HepG2 (cell line): ENCODE measurements at regions of chr11 and their contacts with region 1.

Region 1: DNA sequence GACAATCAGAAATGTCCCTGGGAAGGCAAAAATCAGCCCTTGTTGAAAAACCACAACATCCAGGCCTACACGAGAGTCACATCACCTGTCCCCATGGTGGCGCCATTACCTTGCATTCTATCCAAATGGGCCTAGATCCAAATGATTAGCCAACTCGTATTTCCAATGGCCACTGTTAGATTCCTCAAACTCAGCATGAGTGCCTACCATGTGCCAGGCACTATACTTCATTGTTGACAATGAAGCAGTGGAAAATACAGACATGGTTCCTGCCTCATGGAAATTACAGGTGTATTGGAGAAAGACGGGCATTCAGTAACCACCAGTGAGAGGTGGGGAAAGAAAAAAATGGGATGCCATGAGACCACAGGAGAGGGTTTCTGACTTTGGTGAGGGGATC is 29.8 kb upstream of the CREB3L1 start:
- DNase-seq: peak; percentile 72
- ATAC-seq: peak; percentile 12
- H3K4me3 ChIP-seq: no peak overlapping the region
- H3K27ac ChIP-seq: no peak overlapping the region
- H3K4me1 ChIP-seq: peaks cover 46% of the 10 kb centered on the region
- H3K27me3 ChIP-seq: peaks cover 9 to 31% of the 10 kb centered on the region in 2 experiments; a peak in 3 of 5 replicates
- CTCF ChIP-seq: peak; percentile 86
- EP300 ChIP-seq: no peak
- POLR2A ChIP-seq: no peak
- RAD21 ChIP-seq: peak; percentile 80

Region 2: GRCh38 chr11:45444796-45445195 is 802.9 kb before region 1 on chr11:
- CTCF ChIA-PET with region 1: no interaction called
- POLR2A ChIA-PET with region 1: no interaction called
- in situ Hi-C with region 1: no loop called
- intact Hi-C with region 1: no loop called
- DNase-seq: no peak
- ATAC-seq: no peak
- H3K4me3 ChIP-seq: no peak overlapping the region
- H3K27ac ChIP-seq: no peak overlapping the region
- H3K4me1 ChIP-seq: no peaks in the 10 kb centered on the region
- H3K27me3 ChIP-seq: peaks cover 2 to 14% of the 10 kb centered on the region in 2 experiments; a peak in 3 of 5 replicates
- CTCF ChIP-seq: no peak
- EP300 ChIP-seq: no peak
- POLR2A ChIP-seq: no peak
- RAD21 ChIP-seq: no peak

Region 3: DNA sequence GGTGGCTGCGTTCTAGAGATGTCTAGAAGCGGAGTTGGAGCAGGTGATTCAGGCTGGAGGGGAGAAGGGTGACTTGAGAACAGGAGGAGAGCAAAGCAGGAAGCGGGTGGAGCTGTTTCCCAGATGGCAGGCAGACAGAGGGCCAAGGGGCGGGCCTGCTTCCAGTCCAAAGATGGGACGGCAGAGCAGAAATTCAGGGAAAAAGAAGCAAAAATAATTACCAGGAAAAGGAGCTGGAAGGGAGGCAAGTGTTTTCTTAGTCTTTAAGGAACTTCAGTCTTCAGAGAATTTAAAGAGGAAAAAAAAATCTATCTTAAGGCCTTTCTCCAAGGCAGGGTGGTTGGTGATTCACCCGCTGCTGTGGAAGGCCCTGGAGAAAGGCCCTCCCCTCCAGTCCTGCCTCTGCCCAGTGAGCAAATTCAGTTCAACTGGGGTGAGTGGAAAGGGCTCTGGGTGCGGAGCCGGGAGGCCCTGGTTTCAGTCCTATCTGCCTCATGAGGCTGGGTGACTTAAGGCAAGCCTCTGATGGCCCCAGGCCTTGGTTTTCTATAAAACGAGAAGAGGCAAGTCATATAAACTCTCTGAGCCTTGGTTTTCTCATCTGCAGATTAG is 25.3 kb after region 1 on chr11:
- CTCF ChIA-PET with region 1: no interaction called
- POLR2A ChIA-PET with region 1: interaction called, 13 read pairs
- in situ Hi-C with region 1: no loop called
- intact Hi-C with region 1: loop called (anchors 2 kb)
- DNase-seq: no peak
- ATAC-seq: peak; percentile 28; the same call in 2 of the 3 replicates
- H3K4me3 ChIP-seq: no peak overlapping the region
- H3K27ac ChIP-seq: no peak overlapping the region
- H3K4me1 ChIP-seq: peaks cover 50% of the 10 kb centered on the region
- H3K27me3 ChIP-seq: peaks cover 6 to 74% of the 10 kb centered on the region in 2 experiments; a peak in 4 of 5 replicates
- CTCF ChIP-seq: no peak
- EP300 ChIP-seq: no peak
- POLR2A ChIP-seq: no peak
- RAD21 ChIP-seq: no peak

Region 4: DNA sequence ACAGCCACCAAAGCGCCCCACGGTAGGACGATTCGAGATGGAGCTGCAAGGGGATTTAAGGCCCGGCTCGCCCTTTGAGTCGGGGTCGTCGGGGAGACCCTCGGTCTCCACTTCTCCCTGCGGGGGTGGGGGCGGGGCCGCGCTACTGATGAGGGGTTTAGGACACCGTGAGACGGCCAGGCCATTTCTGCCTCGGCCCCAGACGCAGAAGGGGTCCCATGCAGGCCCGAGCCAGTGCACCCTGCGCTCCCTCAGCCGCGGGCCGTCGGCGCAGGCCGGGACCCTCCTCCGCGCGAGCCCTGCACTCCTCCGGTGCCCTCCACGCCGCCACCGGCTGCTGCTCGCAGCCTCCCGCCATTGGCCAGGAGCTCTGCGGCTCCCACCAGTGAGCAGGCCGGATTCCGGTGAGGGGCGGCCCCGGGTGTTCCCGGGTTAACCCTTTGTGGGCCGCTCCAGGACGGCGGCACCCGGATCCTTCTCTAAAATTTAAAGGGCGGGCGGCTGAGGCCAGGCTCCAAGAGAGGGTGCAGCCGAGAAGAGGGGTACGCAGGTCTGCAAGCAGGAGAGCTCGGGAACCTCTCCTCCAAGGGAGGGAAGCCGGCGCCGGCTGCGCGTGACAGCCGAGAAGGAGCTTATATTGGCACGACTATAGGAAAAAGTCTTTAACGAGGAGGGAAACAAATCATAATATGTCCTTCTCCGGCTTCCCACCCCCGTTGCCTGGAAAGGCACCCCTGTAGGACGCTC is 47.8 kb after region 1 on chr11:
- CTCF ChIA-PET with region 1: interaction called, 5 read pairs
- POLR2A ChIA-PET with region 1: interaction called, 13 read pairs
- in situ Hi-C with region 1: loop called (anchors 5 kb)
- intact Hi-C with region 1: no loop called
- DNase-seq: peak; percentile 27
- ATAC-seq: peak; percentile 91
- H3K4me3 ChIP-seq: peak overlapping the region; percentile 22 to 50 (median 24); a peak in 3 of 6 replicates
- H3K27ac ChIP-seq: no peak overlapping the region
- H3K4me1 ChIP-seq: peaks cover 27% of the 10 kb centered on the region
- H3K27me3 ChIP-seq: peaks cover 20 to 71% of the 10 kb centered on the region in 2 experiments; a peak in 4 of 5 replicates
- CTCF ChIP-seq: no peak
- EP300 ChIP-seq: no peak
- POLR2A ChIP-seq: no peak
- RAD21 ChIP-seq: no peak

Region 5: DNA sequence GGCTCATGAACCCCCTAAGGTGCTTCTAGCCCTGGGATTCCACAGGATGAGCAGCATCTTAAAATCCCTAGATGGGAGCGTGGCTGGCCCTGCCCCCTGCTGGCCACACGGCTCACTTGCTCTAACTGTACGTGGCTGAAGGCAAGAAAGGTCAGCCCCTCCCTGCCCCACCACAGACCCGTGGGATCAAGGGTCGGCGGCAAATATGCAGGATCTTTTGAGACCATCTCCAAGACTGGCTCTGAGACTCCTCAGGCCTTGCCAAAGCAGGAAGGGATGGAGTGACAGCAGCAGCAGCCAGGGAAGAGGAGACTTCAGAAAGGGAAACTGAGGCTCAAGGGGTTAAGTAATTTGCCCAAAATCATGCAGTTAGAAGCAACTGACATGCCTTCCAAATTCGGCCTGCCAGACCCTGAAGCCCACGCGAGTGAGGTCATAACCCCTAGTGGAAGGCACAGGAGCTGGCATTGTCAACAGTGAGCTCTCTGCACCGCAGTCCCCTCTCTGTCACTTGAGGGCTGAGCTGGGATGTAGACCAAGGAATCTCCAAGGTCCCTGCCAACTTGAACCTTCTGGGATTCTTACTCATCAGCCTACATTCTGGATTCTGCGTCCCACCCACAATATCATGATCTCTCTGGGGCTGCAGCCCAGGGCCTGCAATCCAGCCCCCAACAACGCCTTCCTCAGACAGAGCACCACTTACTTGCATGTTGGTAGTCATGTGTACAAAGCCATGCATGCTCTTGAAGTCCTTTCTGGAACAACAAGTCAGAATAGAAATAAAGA is 61.2 kb after region 1 on chr11:
- CTCF ChIA-PET with region 1: interaction called, 57 read pairs
- POLR2A ChIA-PET with region 1: interaction called, 33 read pairs
- in situ Hi-C with region 1: no loop called
- intact Hi-C with region 1: loop called (anchors 1 kb)
- DNase-seq: peak; percentile 39
- ATAC-seq: peak; percentile 85
- H3K4me3 ChIP-seq: no peak overlapping the region
- H3K27ac ChIP-seq: no peak overlapping the region
- H3K4me1 ChIP-seq: peaks cover 34% of the 10 kb centered on the region
- H3K27me3 ChIP-seq: peaks cover 3 to 9% of the 10 kb centered on the region in 2 experiments; a peak in 3 of 5 replicates
- CTCF ChIP-seq: peak; percentile 94
- EP300 ChIP-seq: no peak
- POLR2A ChIP-seq: no peak
- RAD21 ChIP-seq: peak; percentile 72

Region 6: DNA sequence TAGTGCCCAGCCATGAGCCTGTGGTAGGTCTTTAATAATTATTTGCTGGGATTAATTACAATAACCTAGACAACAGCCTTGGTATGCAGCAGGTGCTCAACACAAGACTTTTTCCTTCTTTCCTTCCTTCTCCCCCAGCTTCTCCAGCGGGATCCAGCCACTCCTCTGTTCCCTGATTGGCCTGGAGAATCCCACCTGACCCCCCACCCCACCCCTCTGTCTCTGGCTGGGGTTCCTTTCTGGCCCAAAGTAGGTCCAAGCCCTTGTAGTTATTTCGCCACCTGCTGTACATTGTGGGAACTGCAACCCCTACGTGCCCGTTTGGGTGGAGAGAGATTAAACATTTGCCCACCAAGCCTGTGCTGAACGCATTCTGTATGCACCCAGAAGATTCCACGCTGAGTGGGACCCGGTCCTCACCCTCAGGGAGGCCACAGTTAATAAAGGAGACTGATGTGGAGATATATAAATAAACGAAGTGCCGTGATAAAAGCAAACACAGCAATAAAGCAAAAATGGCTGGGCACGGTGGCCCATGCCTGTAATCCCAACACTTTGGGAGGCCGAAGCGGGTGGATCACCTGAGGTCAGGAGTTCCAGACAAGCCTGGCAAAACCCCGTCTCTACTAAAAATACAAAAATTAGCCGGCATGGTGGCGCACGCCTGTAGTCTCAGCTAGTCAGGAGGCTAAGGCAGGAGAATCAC is 67.5 kb after region 1 on chr11:
- CTCF ChIA-PET with region 1: interaction called, 57 read pairs
- POLR2A ChIA-PET with region 1: interaction called, 33 read pairs
- in situ Hi-C with region 1: no loop called
- intact Hi-C with region 1: no loop called
- DNase-seq: peak; percentile 57
- ATAC-seq: peak; percentile 71
- H3K4me3 ChIP-seq: no peak overlapping the region
- H3K27ac ChIP-seq: no peak overlapping the region
- H3K4me1 ChIP-seq: peaks cover 10% of the 10 kb centered on the region; the same call in 1 of the 2 replicates
- H3K27me3 ChIP-seq: peaks cover 1 to 22% of the 10 kb centered on the region in 2 experiments; a peak in 3 of 5 replicates
- CTCF ChIP-seq: peak; percentile 83
- EP300 ChIP-seq: no peak
- POLR2A ChIP-seq: no peak
- RAD21 ChIP-seq: 0 out of 2 replicates have a peak, but pooled peaks have one; percentile 13